Aorta (tissue), 5 donors: ENCODE measurements at regions of chr11 and their contacts with region 1.

Region 1: DNA sequence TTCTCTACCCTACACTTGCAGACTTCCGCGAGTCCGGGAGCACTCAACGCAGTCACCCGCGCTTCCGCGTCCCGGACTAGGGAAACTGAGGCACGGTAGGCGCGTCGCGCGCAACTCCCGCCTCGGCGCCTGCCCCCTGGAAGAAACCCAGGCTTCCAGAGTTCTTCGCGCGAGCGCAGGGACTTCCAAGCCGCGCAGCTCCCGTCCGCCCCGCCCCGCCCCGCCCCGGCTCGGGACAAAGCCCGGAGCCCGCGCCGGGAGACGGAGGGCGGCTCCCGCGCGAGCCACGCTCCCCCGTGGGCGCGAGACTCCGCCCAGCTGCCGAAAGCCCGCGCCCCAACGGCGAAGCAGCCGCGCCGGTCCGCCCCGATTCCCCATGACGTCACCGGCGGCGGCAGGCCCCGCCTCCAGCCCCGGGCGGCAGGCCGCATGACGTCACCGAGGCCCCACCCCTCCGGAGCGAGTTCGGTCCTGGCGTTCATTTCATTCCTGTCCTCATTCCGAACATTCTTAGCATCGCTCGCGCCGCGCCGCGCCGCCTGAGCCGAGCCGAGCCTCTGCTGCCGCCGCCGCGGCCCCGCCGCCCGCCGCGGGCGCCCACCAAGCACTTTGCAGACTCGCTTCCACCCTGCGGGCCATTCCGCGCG is at the start of gene TEAD1:
- DNase-seq: peak; percentile 96 to 99
- ATAC-seq: peak; percentile 96
- H3K4me3 ChIP-seq: peak within 1 kb of the TSS; percentile 92 to 99
- H3K27ac ChIP-seq: peak within 1 kb of the TSS; percentile 71 to 88
- H3K4me1 ChIP-seq: peaks cover 0 to 2% of the 10 kb centered on the region in 2 donors
- H3K27me3 ChIP-seq: no peaks in the 10 kb centered on the region
- total RNA-seq, gene TEAD1: 56.5 to 64.9 TPM

Region 2: DNA sequence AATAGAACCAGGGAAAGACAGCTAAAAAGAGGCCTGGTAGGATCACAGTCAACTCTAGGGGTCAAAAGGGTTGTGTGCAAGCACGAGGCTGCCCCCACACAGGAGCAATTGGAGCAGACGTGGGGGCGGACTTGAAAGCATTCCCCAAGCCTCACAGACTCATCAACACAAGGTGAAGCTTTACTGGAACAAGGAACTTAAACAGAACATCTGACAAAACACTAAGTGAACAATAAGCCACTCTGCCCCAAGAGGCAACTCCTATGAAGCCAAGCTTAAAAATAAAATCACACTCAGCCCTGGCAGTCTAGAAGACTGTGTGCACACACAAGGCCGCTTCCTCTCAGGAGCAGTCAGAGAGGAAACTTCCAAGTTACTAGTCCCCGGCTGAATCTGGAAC is 32.0 kb before region 1 on chr11:
- intact Hi-C with region 1: no loop called
- DNase-seq: no peak
- ATAC-seq: peak; percentile 52
- H3K4me3 ChIP-seq: no peak overlapping the region
- H3K27ac ChIP-seq: no peak overlapping the region
- H3K4me1 ChIP-seq: no peaks in the 10 kb centered on the region
- H3K27me3 ChIP-seq: no peaks in the 10 kb centered on the region

Region 3: GRCh38 chr11:12706545-12707499 is 32.8 kb after region 1 on chr11:
- intact Hi-C with region 1: no loop called
- DNase-seq: no peak
- ATAC-seq: no peak
- H3K4me3 ChIP-seq: no peak overlapping the region
- H3K27ac ChIP-seq: no peak overlapping the region
- H3K4me1 ChIP-seq: peaks cover 0 to 2% of the 10 kb centered on the region in 2 donors
- H3K27me3 ChIP-seq: no peaks in the 10 kb centered on the region

Region 4: DNA sequence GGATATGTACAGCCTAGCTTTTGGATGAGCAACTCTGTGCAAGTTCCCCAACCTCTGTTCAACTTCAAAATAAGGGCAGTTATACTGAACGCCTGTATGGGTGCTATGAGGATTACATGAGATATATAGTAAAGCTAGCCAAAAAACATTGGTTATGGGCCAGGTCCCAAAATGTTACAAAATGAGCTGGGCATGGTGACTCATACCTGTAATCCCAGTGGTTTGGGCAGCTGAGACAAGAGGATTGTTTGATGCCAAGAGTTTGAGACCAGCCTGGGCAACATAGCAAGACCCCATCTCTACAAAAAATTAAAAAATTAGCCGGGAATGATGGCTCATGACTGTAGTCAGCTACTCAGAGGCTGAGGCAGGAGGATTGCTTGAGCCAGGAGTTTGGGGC is 118.5 kb after region 1 on chr11:
- intact Hi-C with region 1: loop called in 1 of 2 experiments (anchors 10 kb)
- DNase-seq: no peak
- ATAC-seq: no peak
- H3K4me3 ChIP-seq: no peak overlapping the region
- H3K27ac ChIP-seq: no peak overlapping the region
- H3K4me1 ChIP-seq: peaks cover 0 to 9% of the 10 kb centered on the region in 2 donors
- H3K27me3 ChIP-seq: no peaks in the 10 kb centered on the region